ENCODE measurements at regions of chr2 and their contacts with region 1.

Region 1: DNA sequence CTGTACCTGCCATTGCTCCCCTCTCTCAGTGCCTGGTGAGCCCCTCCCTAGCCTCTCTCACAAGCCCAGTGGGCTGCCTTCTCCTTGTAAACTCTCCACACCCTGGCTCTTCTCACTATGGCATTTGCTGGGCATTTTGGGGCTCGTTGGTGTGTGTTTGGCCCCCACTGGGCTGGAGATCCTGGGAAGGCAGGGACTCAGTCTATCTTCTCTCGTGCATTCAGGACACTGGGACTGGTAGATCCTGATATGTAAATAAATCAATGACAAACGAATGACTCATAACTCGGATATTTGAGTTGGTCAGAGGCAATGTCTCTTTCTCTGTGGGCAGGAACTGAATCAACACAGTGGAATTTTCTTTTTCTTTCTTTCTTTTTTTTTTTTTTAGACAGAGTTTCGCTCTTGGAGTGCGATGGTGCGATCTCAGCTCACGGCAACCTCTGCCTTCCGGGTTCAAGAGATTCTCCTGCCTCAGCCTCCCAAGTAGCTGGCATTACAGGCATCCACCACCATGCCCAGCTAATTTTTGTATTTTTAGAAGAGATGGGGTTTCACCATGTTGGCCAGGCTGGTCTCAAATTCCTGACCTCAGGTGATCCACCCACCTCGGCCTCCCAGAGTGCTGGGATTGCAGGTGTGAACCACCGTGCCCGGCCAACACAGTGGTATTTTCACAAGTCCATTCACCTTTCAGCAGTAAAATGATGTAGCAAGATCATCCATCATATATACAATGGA is 144.6 kb upstream of the SPRED2 start:
- DNase-seq: peak in 1 of 2 experiments; percentile 57
- H3K4me3 ChIP-seq: no peak overlapping the region
- H3K4me3 Mint-ChIP-seq: peak overlapping the region; percentile 15
- H3K27ac Mint-ChIP-seq: peak overlapping the region; percentile 87
- H3K4me1 ChIP-seq: peaks cover 12% of the 10 kb centered on the region
- H3K4me1 Mint-ChIP-seq: peaks cover 7% of the 10 kb centered on the region
- H3K27me3 ChIP-seq: no peaks in the 10 kb centered on the region
- H3K27me3 Mint-ChIP-seq: no peaks in the 10 kb centered on the region
- CTCF ChIP-seq: no peak

Region 2: DNA sequence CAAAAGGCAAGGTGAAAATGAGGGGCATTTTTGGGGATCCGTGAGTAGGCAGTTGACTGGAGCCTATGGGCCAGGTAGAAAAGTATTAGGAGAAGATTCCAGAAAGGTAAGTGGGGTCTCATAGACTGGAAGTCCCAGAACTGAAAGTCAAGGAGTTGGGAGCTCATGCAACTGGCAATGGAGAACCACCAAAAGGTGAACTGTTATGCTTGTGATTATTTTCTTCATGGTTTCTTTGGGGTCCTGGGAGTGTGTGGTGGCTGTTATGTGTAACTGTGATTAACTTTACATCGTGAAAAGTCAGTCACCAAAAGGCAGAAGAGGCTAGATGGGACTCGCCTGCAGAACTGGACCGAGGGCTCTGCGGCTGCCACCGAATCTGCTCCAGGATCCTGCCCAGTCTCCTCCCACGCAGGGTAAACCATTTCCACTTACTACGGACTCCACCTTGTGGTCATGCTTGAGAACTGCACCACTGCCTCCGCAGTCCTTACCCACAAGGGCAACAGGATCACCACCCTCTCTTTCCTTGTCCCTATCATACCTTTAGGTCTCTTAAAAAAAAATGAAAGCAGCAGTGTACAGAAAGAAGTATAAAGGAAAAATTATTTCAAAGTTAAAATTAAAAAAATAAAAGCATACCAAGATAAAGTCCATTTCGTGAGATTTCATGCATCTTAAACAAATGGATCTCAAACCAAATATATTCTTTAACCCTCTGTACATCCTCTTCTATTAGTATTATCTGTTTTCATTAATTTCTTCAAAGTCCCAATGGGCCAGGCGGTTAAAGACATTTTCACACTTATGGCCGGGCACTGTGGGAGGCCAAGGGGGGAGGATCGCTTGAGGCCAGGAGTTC is 536.4 kb before region 1 on chr2:
- CTCF ChIA-PET with region 1: no interaction called
- POLR2A ChIA-PET with region 1: no interaction called
- intact Hi-C with region 1: loop called (anchors 1 kb)
- DNase-seq: peak; percentile 83 to 87
- H3K4me3 ChIP-seq: no peak overlapping the region
- H3K4me3 Mint-ChIP-seq: peak overlapping the region; percentile 10
- H3K27ac Mint-ChIP-seq: no peak overlapping the region
- H3K4me1 ChIP-seq: no peaks in the 10 kb centered on the region
- H3K4me1 Mint-ChIP-seq: peaks cover 6% of the 10 kb centered on the region
- H3K27me3 ChIP-seq: no peaks in the 10 kb centered on the region
- H3K27me3 Mint-ChIP-seq: no peaks in the 10 kb centered on the region
- CTCF ChIP-seq: peak; percentile 90 to 97

Region 3: DNA sequence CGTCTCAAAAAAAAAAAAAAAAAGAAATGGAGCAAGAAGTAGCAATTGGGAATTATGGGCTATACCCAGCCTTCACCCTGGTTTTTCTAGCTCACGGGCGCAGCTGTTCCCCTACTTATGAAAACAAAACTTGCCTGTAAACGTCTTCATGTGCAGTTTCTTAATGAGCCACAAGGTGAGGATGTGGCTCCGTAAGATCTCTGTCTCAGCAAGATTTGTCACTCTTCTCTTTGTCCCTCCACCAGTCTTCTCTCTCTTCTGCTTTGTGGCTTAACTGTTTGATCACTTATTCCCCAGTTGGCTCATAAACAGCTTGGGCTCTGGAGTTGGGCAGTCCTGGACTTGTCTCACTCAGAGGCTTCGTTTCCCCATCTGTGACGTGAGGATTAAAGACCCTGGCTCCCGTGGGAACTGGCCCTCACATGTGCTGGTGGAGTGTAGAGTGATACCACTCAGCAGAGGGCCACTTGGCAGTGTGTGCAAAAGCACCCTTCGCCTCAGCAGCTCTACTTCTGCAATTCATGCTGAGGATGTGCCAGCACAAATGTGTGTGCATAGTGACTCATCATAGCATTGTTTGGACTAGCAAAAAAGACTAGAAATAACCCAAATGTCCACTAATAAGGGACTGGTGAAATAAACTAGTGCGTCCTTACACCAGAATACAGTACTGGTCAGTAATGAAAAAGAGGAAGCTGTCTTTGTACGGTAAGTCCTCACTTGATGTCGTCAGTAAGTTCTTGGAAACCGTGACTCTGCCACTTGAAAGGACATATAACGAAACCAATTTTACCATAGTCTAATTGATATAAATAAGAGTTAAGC is 512.1 kb before region 1 on chr2:
- CTCF ChIA-PET with region 1: interaction called, 4 read pairs
- POLR2A ChIA-PET with region 1: no interaction called
- intact Hi-C with region 1: loop called (anchors 1 kb)
- DNase-seq: peak in 1 of 2 experiments; percentile 42
- H3K4me3 ChIP-seq: no peak overlapping the region
- H3K4me3 Mint-ChIP-seq: no peak overlapping the region
- H3K27ac Mint-ChIP-seq: no peak overlapping the region
- H3K4me1 ChIP-seq: peaks cover 5% of the 10 kb centered on the region; the same call in 1 of the 2 replicates
- H3K4me1 Mint-ChIP-seq: no peaks in the 10 kb centered on the region
- H3K27me3 ChIP-seq: no peaks in the 10 kb centered on the region
- H3K27me3 Mint-ChIP-seq: no peaks in the 10 kb centered on the region
- CTCF ChIP-seq: peak; percentile 47 to 82

Region 4: GRCh38 chr2:65527451-65528240 is 49.4 kb before region 1 on chr2:
- CTCF ChIA-PET with region 1: interaction called, 4 read pairs
- POLR2A ChIA-PET with region 1: interaction called, 3 read pairs
- intact Hi-C with region 1: loop called (anchors 1 kb)
- DNase-seq: peak; percentile 86 to 91
- H3K4me3 ChIP-seq: no peak overlapping the region
- H3K4me3 Mint-ChIP-seq: no peak overlapping the region
- H3K27ac Mint-ChIP-seq: no peak overlapping the region
- H3K4me1 ChIP-seq: peaks cover 21% of the 10 kb centered on the region
- H3K4me1 Mint-ChIP-seq: peaks cover 28% of the 10 kb centered on the region
- H3K27me3 ChIP-seq: no peaks in the 10 kb centered on the region
- H3K27me3 Mint-ChIP-seq: no peaks in the 10 kb centered on the region
- CTCF ChIP-seq: peak in 1 of 2 experiments; percentile 31

Region 5: DNA sequence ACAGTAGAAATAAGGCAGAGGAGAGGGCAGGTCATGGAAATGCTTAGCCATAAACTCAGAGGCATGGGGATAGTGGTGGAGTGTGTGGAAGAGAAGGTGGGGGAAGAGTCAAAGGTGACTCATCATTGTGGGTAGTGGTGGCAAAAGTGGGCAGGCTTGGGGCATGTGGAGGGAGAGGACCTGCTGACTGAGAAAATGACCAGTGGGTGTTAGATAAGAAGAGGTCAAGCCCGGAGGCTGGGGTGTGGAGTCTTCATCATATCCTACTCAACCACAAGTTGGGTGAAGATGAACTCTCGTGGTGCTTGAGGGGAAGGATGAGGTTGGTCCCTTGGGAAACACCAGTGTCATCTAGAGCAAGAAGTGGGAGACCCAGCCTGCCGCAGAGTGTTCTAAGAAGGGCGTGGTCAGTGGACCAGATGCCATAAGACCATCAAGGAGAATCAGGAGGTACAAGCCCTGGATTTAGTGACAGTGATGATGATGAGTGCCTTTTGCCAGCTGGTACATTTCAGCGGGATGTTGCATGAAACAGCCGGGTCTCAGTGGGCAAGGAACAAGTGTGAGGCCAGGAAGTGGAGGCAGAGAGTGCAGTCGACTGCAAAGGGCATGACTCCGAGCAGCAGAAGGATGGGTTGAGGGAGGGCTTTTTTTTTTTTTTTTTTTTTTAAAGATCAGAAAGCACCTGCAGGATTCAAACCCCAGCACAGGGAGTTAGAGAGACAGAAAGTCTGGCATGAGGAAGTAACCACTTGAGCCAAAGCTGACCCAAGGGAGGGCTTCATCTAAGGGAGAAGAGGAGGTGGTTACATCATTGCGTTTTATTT is 22.1 kb before region 1 on chr2:
- CTCF ChIA-PET with region 1: no interaction called
- POLR2A ChIA-PET with region 1: no interaction called
- intact Hi-C with region 1: loop called (anchors 2 kb)
- DNase-seq: no peak
- H3K4me3 ChIP-seq: no peak overlapping the region
- H3K4me3 Mint-ChIP-seq: no peak overlapping the region
- H3K27ac Mint-ChIP-seq: no peak overlapping the region
- H3K4me1 ChIP-seq: peaks cover 5% of the 10 kb centered on the region; the same call in 1 of the 2 replicates
- H3K4me1 Mint-ChIP-seq: no peaks in the 10 kb centered on the region
- H3K27me3 ChIP-seq: no peaks in the 10 kb centered on the region
- H3K27me3 Mint-ChIP-seq: peaks cover 8% of the 10 kb centered on the region
- CTCF ChIP-seq: no peak

Region 6: DNA sequence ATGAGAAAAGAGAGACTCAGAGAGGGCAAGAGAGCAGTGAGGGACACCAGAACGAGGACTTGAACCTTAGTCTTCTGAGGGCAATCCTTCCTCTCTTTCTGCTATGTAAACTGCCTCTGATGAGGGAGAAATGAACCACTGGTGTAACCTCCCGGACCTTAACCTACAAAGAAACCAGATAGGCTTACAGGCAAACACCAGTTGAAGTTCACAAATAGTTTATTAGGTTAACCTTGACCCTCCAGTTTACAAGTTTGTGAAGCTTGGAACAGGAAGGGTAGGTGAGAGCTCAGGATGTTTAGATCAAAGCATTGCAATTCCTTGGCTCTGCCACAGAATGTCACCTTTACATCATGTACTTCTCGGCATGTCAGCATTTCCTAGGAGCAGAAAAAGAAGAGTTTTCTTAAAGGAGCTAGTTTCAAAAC is 341.7 kb after region 1 on chr2:
- CTCF ChIA-PET with region 1: no interaction called
- POLR2A ChIA-PET with region 1: no interaction called
- intact Hi-C with region 1: no loop called
- DNase-seq: no peak
- H3K4me3 ChIP-seq: no peak overlapping the region
- H3K4me3 Mint-ChIP-seq: no peak overlapping the region
- H3K27ac Mint-ChIP-seq: no peak overlapping the region
- H3K4me1 ChIP-seq: no peaks in the 10 kb centered on the region
- H3K4me1 Mint-ChIP-seq: no peaks in the 10 kb centered on the region
- H3K27me3 ChIP-seq: no peaks in the 10 kb centered on the region
- H3K27me3 Mint-ChIP-seq: peaks cover 13% of the 10 kb centered on the region
- CTCF ChIP-seq: peak in 1 of 2 experiments; percentile 14